ENCODE measurements at regions of chr5 and their contacts with region 1.

Region 1: GRCh38 chr5:105670586-105670985 is 2000.2 kb downstream of the EFNA5 start:
- DNase-seq: no peak
- H3K4me3 ChIP-seq: no peak overlapping the region
- H3K27ac ChIP-seq: no peak overlapping the region
- H3K4me1 ChIP-seq: no peaks in the 10 kb centered on the region
- H3K27me3 ChIP-seq: no peaks in the 10 kb centered on the region
- CTCF ChIP-seq: no peak
- EP300 ChIP-seq: no peak
- POLR2A ChIP-seq: no peak

Region 2: GRCh38 chr5:105644522-105644921 is 26.1 kb before region 1 on chr5:
- intact Hi-C with region 1: loop called in 1 of 4 experiments (anchors 2 kb)
- DNase-seq: no peak
- H3K4me3 ChIP-seq: no peak overlapping the region
- H3K27ac ChIP-seq: no peak overlapping the region
- H3K4me1 ChIP-seq: no peaks in the 10 kb centered on the region
- H3K27me3 ChIP-seq: no peaks in the 10 kb centered on the region
- CTCF ChIP-seq: no peak
- EP300 ChIP-seq: no peak
- POLR2A ChIP-seq: no peak

Measured in ovary (tissue), 10 donors.